Activated T-helper 2 cell treated with anti-CD3 and anti-CD28 coated beads, Interferon-gamma antibody, Interleukin-2, Interleukin-4, amounts not matched to agents 10 μg/mL and 5 μg/mL and 100 μg/mL, durations not matched to agents 14 hours and 24 hours and 36 hours (primary cell): ENCODE measurements at regions of chr7 and their contacts with region 1.

Region 1: GRCh38 chr7:121994625-121995410 is 121.9 kb downstream of the PTPRZ1 start:
- DNase-seq: no peak
- H3K4me3 Mint-ChIP-seq: no peak overlapping the region
- H3K27ac Mint-ChIP-seq: no peak overlapping the region
- H3K4me1 Mint-ChIP-seq: no peaks in the 10 kb centered on the region
- H3K27me3 Mint-ChIP-seq: no peaks in the 10 kb centered on the region

Region 2: GRCh38 chr7:121126801-121127534 is 867.9 kb before region 1 on chr7:
- intact Hi-C with region 1: loop called (anchors 10 kb)
- DNase-seq: no peak
- H3K4me3 Mint-ChIP-seq: no peak overlapping the region
- H3K27ac Mint-ChIP-seq: no peak overlapping the region
- H3K4me1 Mint-ChIP-seq: no peaks in the 10 kb centered on the region
- H3K27me3 Mint-ChIP-seq: peaks cover 1% of the 10 kb centered on the region

Region 3: GRCh38 chr7:121752706-121753105 is 242.1 kb before region 1 on chr7:
- intact Hi-C with region 1: loop called (anchors 2 kb)
- DNase-seq: no peak
- H3K4me3 Mint-ChIP-seq: no peak overlapping the region
- H3K27ac Mint-ChIP-seq: no peak overlapping the region
- H3K4me1 Mint-ChIP-seq: no peaks in the 10 kb centered on the region
- H3K27me3 Mint-ChIP-seq: no peaks in the 10 kb centered on the region

Region 4: GRCh38 chr7:121954803-121955202 is 40.0 kb before region 1 on chr7:
- intact Hi-C with region 1: no loop called
- DNase-seq: no peak
- H3K4me3 Mint-ChIP-seq: no peak overlapping the region
- H3K27ac Mint-ChIP-seq: no peak overlapping the region
- H3K4me1 Mint-ChIP-seq: no peaks in the 10 kb centered on the region
- H3K27me3 Mint-ChIP-seq: no peaks in the 10 kb centered on the region

Region 5: GRCh38 chr7:121966276-121966934 is 28.4 kb before region 1 on chr7:
- intact Hi-C with region 1: no loop called
- DNase-seq: no peak
- H3K4me3 Mint-ChIP-seq: no peak overlapping the region
- H3K27ac Mint-ChIP-seq: no peak overlapping the region
- H3K4me1 Mint-ChIP-seq: no peaks in the 10 kb centered on the region
- H3K27me3 Mint-ChIP-seq: no peaks in the 10 kb centered on the region

Region 6: DNA sequence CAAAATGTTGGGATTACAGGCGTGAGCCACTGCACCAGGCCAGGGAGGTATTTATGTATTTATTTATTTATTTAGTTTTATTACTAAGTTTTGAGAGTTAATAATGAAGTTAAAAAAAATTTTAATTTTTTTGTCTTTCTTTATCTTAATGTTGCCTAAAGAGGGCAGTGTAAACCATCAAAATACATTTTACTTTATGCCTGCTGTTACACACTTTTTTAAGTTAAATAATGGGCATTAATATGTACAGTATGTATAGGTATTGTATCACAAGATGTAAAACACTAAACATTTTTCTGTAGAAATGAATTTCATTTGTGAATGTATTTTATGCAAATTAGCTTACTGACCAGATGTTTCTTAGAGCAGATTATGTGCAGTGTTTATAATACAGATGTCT is 19.9 kb after region 1 on chr7:
- intact Hi-C with region 1: no loop called
- DNase-seq: no peak
- H3K4me3 Mint-ChIP-seq: no peak overlapping the region
- H3K27ac Mint-ChIP-seq: no peak overlapping the region
- H3K4me1 Mint-ChIP-seq: peaks cover 11% of the 10 kb centered on the region
- H3K27me3 Mint-ChIP-seq: no peaks in the 10 kb centered on the region

Region 7: GRCh38 chr7:122572706-122573105 is 577.9 kb after region 1 on chr7:
- intact Hi-C with region 1: no loop called
- DNase-seq: no peak
- H3K4me3 Mint-ChIP-seq: no peak overlapping the region
- H3K27ac Mint-ChIP-seq: no peak overlapping the region
- H3K4me1 Mint-ChIP-seq: no peaks in the 10 kb centered on the region
- H3K27me3 Mint-ChIP-seq: no peaks in the 10 kb centered on the region